ENCODE measurements at regions of chr1 and their contacts with region 1.

Region 1: GRCh38 chr1:171420810-171421209 is 64.5 kb upstream of the PRRC2C start:
- DNase-seq: no peak
- ATAC-seq: peak; percentile 27
- H3K4me3 ChIP-seq: no peak overlapping the region
- H3K4me3 Mint-ChIP-seq: peak overlapping the region in 7 of 10 donors; percentile 2 to 61 (median 31)
- H3K27ac ChIP-seq: no peak overlapping the region
- H3K27ac Mint-ChIP-seq: peak overlapping the region; percentile 3 to 85 (median 50)
- H3K4me1 ChIP-seq: peaks cover 4 to 11% of the 10 kb centered on the region in 2 donors
- H3K4me1 Mint-ChIP-seq: peaks cover 8 to 21% (median 13%) of the 10 kb centered on the region in 7 donors
- H3K27me3 ChIP-seq: no peaks in the 10 kb centered on the region
- H3K27me3 Mint-ChIP-seq: no peaks in the 10 kb centered on the region

Region 2: DNA sequence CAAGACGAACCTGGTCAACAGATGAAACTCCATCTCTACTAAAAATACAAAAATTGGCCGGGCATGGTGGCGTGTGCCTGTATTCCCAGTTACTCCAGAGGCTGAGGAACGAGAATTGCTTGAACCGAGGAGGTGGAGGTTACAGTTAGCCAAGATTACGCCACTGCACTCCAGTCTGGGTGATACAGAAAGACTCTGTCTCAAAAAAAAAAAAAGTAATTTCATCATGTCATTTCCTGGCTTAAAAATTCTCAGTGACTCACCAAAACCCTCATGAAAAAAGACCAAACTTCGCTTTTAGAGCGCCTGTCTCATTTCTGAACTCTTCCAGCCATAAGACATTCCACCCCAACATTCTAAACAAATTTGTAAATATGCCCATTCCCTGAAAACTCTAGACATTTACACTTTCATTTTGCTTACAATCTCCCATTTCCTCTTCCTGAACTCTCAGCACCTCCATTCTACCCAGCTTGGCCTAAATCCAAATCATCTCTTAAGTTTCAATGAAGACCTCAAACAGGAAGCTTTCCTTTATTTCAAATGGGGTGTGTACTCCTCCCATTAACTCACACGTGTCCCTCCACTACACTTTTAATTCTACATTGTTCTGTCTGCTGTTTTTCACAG is 14.0 kb after region 1 on chr1:
- CTCF ChIA-PET with region 1: no interaction called
- POLR2A ChIA-PET with region 1: no interaction called
- intact Hi-C with region 1: loop called in 1 of 2 experiments (anchors 1 kb)
- DNase-seq: peak in 7 of 9 donors; percentile 1 to 30 (median 11)
- ATAC-seq: peak; percentile 54
- H3K4me3 ChIP-seq: no peak overlapping the region
- H3K4me3 Mint-ChIP-seq: peak overlapping the region; percentile 22 to 77 (median 74)
- H3K27ac ChIP-seq: no peak overlapping the region
- H3K27ac Mint-ChIP-seq: peak overlapping the region; percentile 43 to 86 (median 78)
- H3K4me1 ChIP-seq: no peaks in the 10 kb centered on the region
- H3K4me1 Mint-ChIP-seq: peaks cover 10 to 24% (median 19%) of the 10 kb centered on the region in 7 donors
- H3K27me3 ChIP-seq: no peaks in the 10 kb centered on the region
- H3K27me3 Mint-ChIP-seq: peaks cover 0 to 6% (median 2%) of the 10 kb centered on the region in 5 donors